Activated CD8-positive, alpha-beta T cell treated with anti-CD3 and anti-CD28 coated beads for 36 hours (primary cell): ENCODE measurements at regions of chr7 and their contacts with region 1.

Region 1: GRCh38 chr7:131107337-131108211 is 220.1 kb upstream of the MKLN1 start:
- DNase-seq: peak; percentile 88
- ATAC-seq: peak; percentile 40
- H3K4me3 Mint-ChIP-seq: peak overlapping the region; percentile 97
- H3K27ac Mint-ChIP-seq: peak overlapping the region; percentile 100
- H3K4me1 Mint-ChIP-seq: peaks cover 65% of the 10 kb centered on the region
- H3K27me3 Mint-ChIP-seq: no peaks in the 10 kb centered on the region
- CTCF ChIP-seq: no peak

Region 2: GRCh38 chr7:130966246-130967009 is 141.1 kb before region 1 on chr7:
- CTCF ChIA-PET with region 1: no interaction called
- POLR2A ChIA-PET with region 1: interaction called, 50 read pairs
- intact Hi-C with region 1: loop called (anchors 5 kb)
- DNase-seq: peak; percentile 53
- ATAC-seq: peak; percentile 18
- H3K4me3 Mint-ChIP-seq: peak overlapping the region; percentile 26
- H3K27ac Mint-ChIP-seq: peak overlapping the region; percentile 83
- H3K4me1 Mint-ChIP-seq: peaks cover 69% of the 10 kb centered on the region
- H3K27me3 Mint-ChIP-seq: no peaks in the 10 kb centered on the region
- CTCF ChIP-seq: no peak

Region 3: GRCh38 chr7:131071786-131072504 is 35.6 kb before region 1 on chr7:
- CTCF ChIA-PET with region 1: interaction called, 36 read pairs
- POLR2A ChIA-PET with region 1: interaction called, 10 read pairs
- intact Hi-C with region 1: loop called (anchors 5 kb)
- DNase-seq: peak; percentile 37
- ATAC-seq: no peak
- H3K4me3 Mint-ChIP-seq: peak overlapping the region; percentile 24
- H3K27ac Mint-ChIP-seq: peak overlapping the region; percentile 83
- H3K4me1 Mint-ChIP-seq: peaks cover 84% of the 10 kb centered on the region
- H3K27me3 Mint-ChIP-seq: no peaks in the 10 kb centered on the region
- CTCF ChIP-seq: peak; percentile 55

Region 4: GRCh38 chr7:131096267-131096927 is 11.2 kb before region 1 on chr7:
- CTCF ChIA-PET with region 1: interaction called, 4 read pairs
- POLR2A ChIA-PET with region 1: interaction called, 13 read pairs
- intact Hi-C with region 1: no loop called
- DNase-seq: no peak
- ATAC-seq: no peak
- H3K4me3 Mint-ChIP-seq: no peak overlapping the region
- H3K27ac Mint-ChIP-seq: peak overlapping the region; percentile 32
- H3K4me1 Mint-ChIP-seq: peaks cover 68% of the 10 kb centered on the region
- H3K27me3 Mint-ChIP-seq: no peaks in the 10 kb centered on the region
- CTCF ChIP-seq: no peak

Region 5: GRCh38 chr7:131188367-131189339 is 81.1 kb after region 1 on chr7:
- CTCF ChIA-PET with region 1: interaction called, 3 read pairs
- POLR2A ChIA-PET with region 1: interaction called, 41 read pairs
- intact Hi-C with region 1: loop called (anchors 5 kb)
- DNase-seq: peak; percentile 70
- ATAC-seq: peak; percentile 84
- H3K4me3 Mint-ChIP-seq: peak overlapping the region; percentile 5
- H3K27ac Mint-ChIP-seq: peak overlapping the region; percentile 93
- H3K4me1 Mint-ChIP-seq: peaks cover 60% of the 10 kb centered on the region
- H3K27me3 Mint-ChIP-seq: no peaks in the 10 kb centered on the region
- CTCF ChIP-seq: no peak

Region 6: GRCh38 chr7:131231381-131232220 is 124.0 kb after region 1 on chr7:
- CTCF ChIA-PET with region 1: interaction called, 5 read pairs
- POLR2A ChIA-PET with region 1: interaction called, 49 read pairs
- intact Hi-C with region 1: loop called (anchors 5 kb)
- DNase-seq: peak; percentile 84
- ATAC-seq: peak; percentile 74
- H3K4me3 Mint-ChIP-seq: peak overlapping the region; percentile 59
- H3K27ac Mint-ChIP-seq: peak overlapping the region; percentile 95
- H3K4me1 Mint-ChIP-seq: peaks cover 46% of the 10 kb centered on the region
- H3K27me3 Mint-ChIP-seq: no peaks in the 10 kb centered on the region
- CTCF ChIP-seq: no peak

Region 7: GRCh38 chr7:131327626-131328376 is 220.2 kb after region 1 on chr7 and contains the start of gene MKLN1:
- CTCF ChIA-PET with region 1: no interaction called
- POLR2A ChIA-PET with region 1: interaction called, 11 read pairs
- intact Hi-C with region 1: loop called (anchors 10 kb)
- DNase-seq: peak; percentile 95
- ATAC-seq: peak; percentile 96
- H3K4me3 Mint-ChIP-seq: peak within 1 kb of the TSS; percentile 99
- H3K27ac Mint-ChIP-seq: peak within 1 kb of the TSS; percentile 95
- H3K4me1 Mint-ChIP-seq: peaks cover 47% of the 10 kb centered on the region
- H3K27me3 Mint-ChIP-seq: no peaks in the 10 kb centered on the region
- CTCF ChIP-seq: no peak
- total RNA-seq, gene MKLN1: 38.5 TPM

Region 8: GRCh38 chr7:132177708-132178399 is 1070.3 kb after region 1 on chr7:
- CTCF ChIA-PET with region 1: no interaction called
- POLR2A ChIA-PET with region 1: no interaction called
- intact Hi-C with region 1: no loop called
- DNase-seq: no peak
- ATAC-seq: no peak
- H3K4me3 Mint-ChIP-seq: no peak overlapping the region
- H3K27ac Mint-ChIP-seq: no peak overlapping the region
- H3K4me1 Mint-ChIP-seq: no peaks in the 10 kb centered on the region
- H3K27me3 Mint-ChIP-seq: no peaks in the 10 kb centered on the region
- CTCF ChIP-seq: no peak